ENCODE measurements at regions of chr17 and their contacts with region 1.

Region 1: DNA sequence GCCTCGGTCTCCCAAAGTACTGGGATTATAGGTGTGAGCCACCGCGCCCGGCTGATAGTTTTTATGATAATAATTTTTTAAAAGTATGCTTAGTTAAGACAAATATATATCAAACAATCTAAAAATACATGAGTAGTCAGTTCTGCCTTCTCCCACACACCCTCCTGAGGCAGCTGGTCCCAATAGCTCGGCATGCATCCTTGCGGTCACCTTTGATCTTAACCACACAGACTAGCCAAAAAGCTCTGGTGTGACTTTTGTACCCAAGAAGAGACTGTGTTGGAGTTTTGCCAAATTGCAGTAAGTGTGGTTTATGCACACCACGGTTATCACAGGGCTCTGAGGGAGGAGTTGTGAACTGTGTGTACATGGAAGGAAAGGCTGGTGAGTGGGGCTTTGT is 25.6 kb downstream of the ATP6V0A1 start:
- DNase-seq: peak; percentile 75
- H3K4me3 Mint-ChIP-seq: peak overlapping the region; percentile 0
- H3K27ac Mint-ChIP-seq: peak overlapping the region; percentile 75
- H3K4me1 Mint-ChIP-seq: peaks cover 27% of the 10 kb centered on the region
- H3K27me3 Mint-ChIP-seq: no peaks in the 10 kb centered on the region

Region 2: DNA sequence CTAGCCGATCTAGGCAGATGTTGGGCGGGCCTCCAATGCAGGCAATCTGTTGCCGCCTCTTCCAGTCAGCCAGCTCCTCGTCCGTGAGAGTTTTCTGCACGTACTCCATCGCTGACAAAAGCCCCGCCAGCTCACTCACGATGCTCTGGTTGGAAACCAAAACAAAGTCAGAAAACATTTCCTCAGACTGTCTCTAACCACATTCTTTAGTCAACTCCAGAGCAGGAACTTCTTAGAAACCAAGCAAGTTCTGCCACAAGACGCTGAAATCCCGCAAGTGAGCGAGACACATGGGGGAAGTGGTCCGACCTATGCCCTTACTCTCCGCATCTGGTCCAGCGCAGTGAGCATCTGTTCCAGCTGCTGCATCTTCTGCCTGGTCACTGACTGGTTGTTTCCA is 146.9 kb before region 1 on chr17:
- intact Hi-C with region 1: loop called (anchors 1 kb)
- DNase-seq: peak; percentile 82
- H3K4me3 Mint-ChIP-seq: peak overlapping the region; percentile 79
- H3K27ac Mint-ChIP-seq: peak overlapping the region; percentile 97
- H3K4me1 Mint-ChIP-seq: peaks cover 76% of the 10 kb centered on the region
- H3K27me3 Mint-ChIP-seq: no peaks in the 10 kb centered on the region

Region 3: DNA sequence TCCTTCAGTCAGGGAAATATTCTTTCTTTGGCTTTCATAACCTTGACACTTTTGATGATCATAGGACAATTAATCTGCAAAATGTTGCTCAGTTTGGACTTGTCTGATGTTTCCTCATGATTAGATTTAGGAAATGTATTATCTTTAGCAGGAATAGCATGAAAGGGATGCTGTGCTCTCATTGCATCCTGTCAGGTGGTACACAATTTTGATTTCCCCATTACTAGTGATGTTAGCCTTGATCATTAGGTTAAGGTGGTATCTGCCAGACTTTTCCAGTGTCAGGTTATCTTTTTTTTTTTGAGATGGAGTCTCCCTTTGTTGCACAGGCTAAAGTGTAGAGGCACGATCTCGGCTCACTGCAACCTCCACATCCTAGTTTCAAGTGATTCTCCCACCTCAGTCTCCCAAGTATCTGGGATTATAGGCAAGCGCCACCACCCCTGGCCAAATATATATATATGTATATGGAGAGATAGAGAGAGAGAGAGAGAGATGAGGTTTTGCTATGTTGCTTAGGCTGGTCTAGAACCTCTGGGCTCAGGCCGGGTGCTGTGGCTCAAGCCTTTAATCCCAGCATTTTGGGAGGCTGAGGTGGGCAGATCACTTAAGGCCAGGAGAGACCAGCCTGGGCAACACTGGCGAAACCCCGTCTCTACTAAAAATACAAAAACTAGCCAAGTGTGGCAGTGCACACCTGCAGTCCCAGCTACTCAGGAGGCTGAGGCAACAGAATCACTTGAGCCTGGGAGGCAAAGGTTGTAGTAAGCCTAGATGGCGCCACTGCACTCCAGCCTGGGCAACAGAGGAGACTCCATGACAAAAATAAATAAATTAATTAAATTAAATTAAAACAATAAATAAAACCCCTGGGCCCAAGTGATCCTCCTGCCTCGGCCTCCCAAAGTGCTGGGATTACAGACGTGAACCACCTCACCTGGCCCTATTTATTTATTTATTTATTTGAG is 45.4 kb before region 1 on chr17:
- intact Hi-C with region 1: loop called (anchors 5 kb)
- DNase-seq: peak; percentile 28
- H3K4me3 Mint-ChIP-seq: no peak overlapping the region
- H3K27ac Mint-ChIP-seq: no peak overlapping the region
- H3K4me1 Mint-ChIP-seq: peaks cover 11% of the 10 kb centered on the region
- H3K27me3 Mint-ChIP-seq: peaks cover 6% of the 10 kb centered on the region

Region 4: GRCh38 chr17:42459256-42459800 is 25.0 kb before region 1 on chr17:
- intact Hi-C with region 1: loop called (anchors 1 kb)
- DNase-seq: peak; percentile 5
- H3K4me3 Mint-ChIP-seq: peak overlapping the region; percentile 91
- H3K27ac Mint-ChIP-seq: peak overlapping the region; percentile 93
- H3K4me1 Mint-ChIP-seq: peaks cover 44% of the 10 kb centered on the region
- H3K27me3 Mint-ChIP-seq: peaks cover 10% of the 10 kb centered on the region

Measured in activated T-helper 1 cell treated with anti-CD3 and anti-CD28 coated beads, Interleukin-12 subunit alpha, Interleukin-12 subunit beta, Interleukin-2, Interleukin-4 antibody, amounts not matched to agents 30 ng/mL and 10 ng/mL and 1 ng/mL, durations not matched to agents 14 hours and 24 hours and 36 hours (primary cell).